ENCODE measurements at regions of chr7 and their contacts with region 1.

Region 1: DNA sequence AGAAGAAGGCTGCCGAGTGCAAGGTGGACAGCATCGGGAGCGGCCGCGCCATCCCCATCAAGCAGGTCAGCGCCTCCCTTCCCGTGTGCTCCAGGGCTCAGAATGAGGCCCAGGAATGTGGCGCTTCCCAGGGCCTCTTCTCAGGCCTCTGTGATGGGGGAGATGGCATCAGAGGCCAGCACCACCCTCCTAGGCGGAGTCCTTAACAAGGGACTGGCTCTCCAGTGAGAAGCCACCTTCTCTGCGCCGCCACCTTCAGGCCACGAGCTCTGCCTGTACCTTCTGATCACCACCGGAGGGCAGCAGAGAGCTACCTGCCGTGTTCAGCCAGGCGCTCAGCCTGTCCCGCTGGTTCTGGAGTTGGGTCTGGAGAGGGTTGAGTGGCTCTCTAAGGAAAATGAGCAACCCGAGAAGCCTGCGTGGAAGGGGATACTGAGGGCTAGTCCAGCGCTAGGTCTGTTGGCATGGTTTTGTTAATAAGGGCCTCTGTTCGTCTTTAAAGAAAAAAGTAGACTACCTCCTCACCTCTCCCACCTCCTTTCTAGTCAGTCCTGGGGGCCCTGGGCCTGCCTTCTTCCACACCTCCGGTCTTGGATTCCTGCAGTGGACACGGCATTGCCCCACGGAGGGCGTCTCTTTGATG is 37.7 kb downstream of the AGAP3 start:
- DNase-seq: peak; percentile 85 to 90 (median 86)
- ATAC-seq: peak; percentile 69 to 75
- H3K4me3 ChIP-seq: no peak overlapping the region
- H3K27ac ChIP-seq: no peak overlapping the region
- H3K4me1 ChIP-seq: no peaks in the 10 kb centered on the region
- H3K27me3 ChIP-seq: no peaks in the 10 kb centered on the region

Region 2: DNA sequence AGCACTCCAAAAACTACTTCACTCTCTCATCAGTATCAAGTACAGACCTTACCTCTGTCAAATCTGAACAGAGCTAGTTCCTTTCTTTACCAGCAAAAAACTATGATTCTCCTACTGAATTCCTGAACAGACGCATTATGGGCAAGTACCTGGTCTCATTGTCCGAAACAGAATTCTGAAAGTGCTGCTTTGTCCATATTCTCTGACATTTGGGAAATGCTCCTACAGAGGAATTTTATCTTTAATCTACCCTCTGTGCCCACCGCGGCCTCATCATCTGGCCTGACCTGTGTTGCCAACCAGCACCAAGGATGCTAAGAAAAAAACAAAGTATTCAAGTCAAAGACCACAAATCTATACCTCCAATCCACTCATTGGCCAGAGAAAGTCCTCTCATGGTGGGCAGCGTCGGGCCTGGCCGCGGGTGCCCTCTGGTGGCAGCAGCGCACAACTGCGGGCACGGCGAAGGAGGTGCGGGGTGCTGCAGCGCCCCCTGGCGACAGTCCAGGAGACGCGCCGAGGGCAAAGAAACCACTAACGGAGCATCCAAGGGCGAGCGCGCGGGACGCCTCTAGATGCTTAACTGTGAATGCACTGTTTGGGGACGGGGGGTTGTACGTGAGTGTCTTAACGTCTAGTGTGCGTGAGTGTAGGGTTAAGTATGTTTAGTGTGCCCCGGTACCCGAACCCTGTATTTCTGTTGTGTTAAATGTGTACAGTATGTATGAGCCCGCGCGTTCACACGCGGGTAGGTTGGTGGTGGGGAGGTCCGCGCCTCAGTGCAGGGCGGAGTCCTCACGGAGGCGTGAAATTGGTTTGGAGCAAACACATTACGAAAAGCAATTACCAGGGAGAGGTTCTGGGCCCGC is 48.6 kb after region 1 on chr7:
- intact Hi-C with region 1: loop called (anchors 1 to 5 kb)
- DNase-seq: peak; percentile 76 to 92 (median 92)
- ATAC-seq: peak; percentile 57 to 66
- H3K4me3 ChIP-seq: no peak overlapping the region
- H3K27ac ChIP-seq: no peak overlapping the region
- H3K4me1 ChIP-seq: peaks cover 3% of the 10 kb centered on the region
- H3K27me3 ChIP-seq: no peaks in the 10 kb centered on the region